ENCODE measurements at regions of chr3 and their contacts with region 1.

Region 1: GRCh38 chr3:32285891-32286290 is 47.4 kb downstream of the CMTM8 start:
- DNase-seq: no peak
- H3K4me3 ChIP-seq: no peak overlapping the region
- H3K27ac ChIP-seq: no peak overlapping the region
- H3K4me1 ChIP-seq: no peaks in the 10 kb centered on the region
- H3K27me3 ChIP-seq: no peaks in the 10 kb centered on the region
- CTCF ChIP-seq: no peak

Region 2: DNA sequence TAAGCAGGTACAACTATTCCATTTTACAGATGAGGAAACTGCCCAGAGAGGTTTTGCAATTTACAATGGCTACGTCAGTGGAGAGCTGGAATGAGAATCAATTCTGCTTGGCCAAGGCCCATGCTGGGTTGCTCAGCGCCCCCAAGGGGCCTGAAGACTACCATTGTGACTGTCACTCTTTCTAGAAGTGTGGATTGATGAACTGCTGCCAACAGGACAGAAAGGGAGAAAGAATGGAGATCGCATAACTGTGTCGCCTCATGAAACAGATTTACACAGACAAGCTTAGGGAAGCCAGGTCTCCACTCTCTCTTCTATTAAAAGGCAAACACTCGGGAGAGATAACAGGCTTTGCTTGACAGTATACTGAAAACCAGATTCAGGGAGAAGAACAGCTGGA is 593.2 kb before region 1 on chr3:
- CTCF ChIA-PET with region 1: no interaction called
- dilution Hi-C with region 1: no loop called
- in situ Hi-C with region 1: no loop called
- intact Hi-C with region 1: no loop called
- DNase-seq: no peak
- H3K4me3 ChIP-seq: no peak overlapping the region
- H3K27ac ChIP-seq: no peak overlapping the region
- H3K4me1 ChIP-seq: no peaks in the 10 kb centered on the region
- H3K27me3 ChIP-seq: no peaks in the 10 kb centered on the region
- CTCF ChIP-seq: no peak

Region 3: DNA sequence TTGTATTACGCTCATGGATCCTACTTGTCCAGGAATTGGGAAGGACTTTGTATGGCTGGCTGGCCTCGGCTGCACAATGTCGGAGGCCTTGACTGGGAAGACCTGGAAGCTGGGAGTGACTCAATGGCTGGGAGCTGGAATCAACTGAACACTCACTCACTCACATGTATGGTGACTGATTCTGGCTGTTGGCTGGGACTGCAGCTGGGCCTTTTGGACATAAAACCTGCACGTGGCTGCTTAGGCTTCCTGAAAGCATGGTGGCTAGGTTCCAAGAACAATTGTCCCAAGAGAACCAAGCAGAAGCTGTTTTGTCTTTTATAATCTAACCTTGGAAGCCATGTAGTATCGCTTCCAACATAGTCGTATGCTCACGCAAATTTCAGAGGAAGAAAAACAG is 85.4 kb before region 1 on chr3:
- CTCF ChIA-PET with region 1: no interaction called
- dilution Hi-C with region 1: no loop called
- in situ Hi-C with region 1: no loop called
- intact Hi-C with region 1: no loop called
- DNase-seq: no peak
- H3K4me3 ChIP-seq: no peak overlapping the region
- H3K27ac ChIP-seq: no peak overlapping the region
- H3K4me1 ChIP-seq: no peaks in the 10 kb centered on the region
- H3K27me3 ChIP-seq: no peaks in the 10 kb centered on the region
- CTCF ChIP-seq: no peak

Region 4: DNA sequence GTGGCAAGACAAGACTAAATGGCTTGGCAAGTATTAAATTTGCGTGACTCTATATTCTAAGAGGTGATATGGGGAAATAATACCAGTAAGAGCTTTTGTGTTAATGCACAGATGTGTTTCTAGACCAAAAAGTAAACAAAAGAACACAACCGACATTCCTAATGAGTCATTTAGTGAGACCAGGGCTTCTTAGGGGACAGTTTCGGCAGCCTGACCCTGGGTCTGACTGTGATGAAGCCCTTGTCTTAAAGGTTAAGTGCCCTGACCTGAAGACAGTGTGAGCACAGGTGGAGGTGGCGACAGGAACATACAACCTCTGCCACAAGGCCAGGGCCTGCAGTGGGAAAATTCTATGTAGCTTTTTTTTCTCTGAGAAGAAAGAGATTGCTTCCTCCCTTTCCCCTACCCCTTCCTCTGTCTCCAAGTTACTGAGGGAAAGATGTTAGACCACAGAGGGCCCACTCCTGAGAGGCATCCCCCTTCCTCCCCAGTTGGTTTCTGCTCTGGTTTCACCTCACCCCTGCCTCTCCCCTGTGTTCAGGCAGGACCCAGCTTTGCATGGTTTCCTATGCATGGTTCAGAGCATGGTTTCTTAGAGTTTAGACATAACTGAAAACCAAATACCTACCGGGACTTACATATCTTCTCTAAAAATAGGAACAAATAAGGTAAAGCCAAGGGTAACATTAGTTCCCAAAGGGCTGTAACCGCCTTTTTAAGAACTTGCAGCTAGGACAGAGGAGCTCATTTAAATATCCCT is 80.9 kb after region 1 on chr3:
- CTCF ChIA-PET with region 1: no interaction called
- dilution Hi-C with region 1: loop called (anchors 5 kb)
- in situ Hi-C with region 1: no loop called
- intact Hi-C with region 1: no loop called
- DNase-seq: peak; percentile 33
- H3K4me3 ChIP-seq: no peak overlapping the region
- H3K27ac ChIP-seq: no peak overlapping the region
- H3K4me1 ChIP-seq: no peaks in the 10 kb centered on the region
- H3K27me3 ChIP-seq: no peaks in the 10 kb centered on the region
- CTCF ChIP-seq: no peak

Region 5: DNA sequence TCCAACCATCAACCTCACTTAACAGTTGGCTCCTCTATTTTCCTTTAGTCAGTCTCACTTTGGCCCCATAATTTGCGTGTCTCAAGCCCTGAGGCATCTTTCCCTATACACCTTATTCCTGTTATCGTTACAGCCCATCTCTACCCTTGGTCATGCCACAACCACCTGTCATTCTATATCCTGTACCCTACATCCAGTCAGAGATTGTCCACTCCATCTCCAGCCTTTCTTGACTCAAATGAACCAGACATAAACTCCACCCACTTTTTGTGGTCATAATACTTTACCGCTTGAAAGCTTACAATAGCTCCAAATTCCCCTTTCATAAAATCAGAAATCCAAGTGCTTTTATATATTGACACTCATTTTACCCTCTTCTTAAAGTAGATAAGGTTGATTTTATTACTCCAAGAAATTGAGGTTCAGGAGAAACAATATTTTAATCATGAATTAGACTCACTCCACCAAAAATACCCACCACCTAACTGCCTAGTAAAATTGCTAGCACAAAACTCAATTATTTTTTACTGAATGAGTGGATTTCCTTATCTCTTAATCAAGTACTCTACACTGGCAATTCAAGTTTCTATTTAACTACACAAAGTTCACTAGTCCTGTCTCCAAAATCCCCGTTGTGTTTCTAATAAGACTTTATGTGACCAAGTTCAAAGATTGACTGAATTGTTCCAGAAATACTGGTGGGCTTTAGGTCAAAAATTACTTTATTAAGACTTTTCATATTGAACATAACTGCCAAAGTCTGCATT is 674.7 kb after region 1 on chr3:
- CTCF ChIA-PET with region 1: no interaction called
- dilution Hi-C with region 1: no loop called
- in situ Hi-C with region 1: no loop called
- intact Hi-C with region 1: no loop called
- DNase-seq: no peak
- H3K4me3 ChIP-seq: no peak overlapping the region
- H3K27ac ChIP-seq: no peak overlapping the region
- H3K4me1 ChIP-seq: peaks cover 13% of the 10 kb centered on the region
- H3K27me3 ChIP-seq: no peaks in the 10 kb centered on the region
- CTCF ChIP-seq: no peak

Measured in mammary epithelial cell (primary cell).